ENCODE measurements at regions of chr2 and their contacts with region 1.

Region 1: GRCh38 chr2:233247765-233248164 is 3.7 kb upstream of the ATG16L1 start:
- DNase-seq: no peak
- ATAC-seq: peak; percentile 20

Region 2: GRCh38 chr2:232854082-232854481 is 393.7 kb before region 1 on chr2:
- intact Hi-C with region 1: loop called in 1 of 2 experiments (anchors 10 kb)
- DNase-seq: peak; percentile 45 to 57
- ATAC-seq: peak; percentile 27

Measured in left colon (tissue), 2 donors.